ENCODE measurements at regions of chr3 and their contacts with region 1.

Region 1: GRCh38 chr3:149129326-149130205 is at the start of gene HPS3:
- DNase-seq: peak; percentile 86 to 91
- H3K4me3 ChIP-seq: peak within 1 kb of the TSS; percentile 84
- H3K4me3 Mint-ChIP-seq: peak within 1 kb of the TSS; percentile 97
- H3K27ac Mint-ChIP-seq: peak within 1 kb of the TSS; percentile 92
- H3K4me1 ChIP-seq: no peaks in the 10 kb centered on the region; the same call in none of the 2 replicates
- H3K4me1 Mint-ChIP-seq: peaks cover 11% of the 10 kb centered on the region
- H3K27me3 ChIP-seq: no peaks in the 10 kb centered on the region
- H3K27me3 Mint-ChIP-seq: no peaks in the 10 kb centered on the region
- CTCF ChIP-seq: no peak
- total RNA-seq, gene HPS3: 19.4 and 20.9 TPM in 2 replicates

Region 2: DNA sequence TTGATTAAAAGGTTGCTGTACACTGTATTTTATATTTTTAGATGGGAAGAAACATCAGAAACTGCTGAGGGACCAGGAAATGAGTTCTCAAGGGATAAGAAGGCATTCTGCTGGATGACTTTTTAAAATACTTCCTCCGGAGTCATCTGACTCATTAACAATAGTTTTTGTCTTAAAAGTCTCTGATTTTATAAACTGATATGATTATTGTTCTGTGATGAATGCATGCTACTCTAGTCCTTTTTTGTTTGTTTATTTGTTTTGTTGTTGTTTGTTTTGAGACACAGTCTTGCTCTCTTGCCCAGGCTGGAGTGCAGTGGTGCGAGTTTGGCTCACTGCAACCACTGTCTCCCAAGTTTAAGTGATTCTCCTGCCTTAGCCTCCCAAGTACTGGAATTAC is 25.1 kb before region 1 on chr3:
- CTCF ChIA-PET with region 1: no interaction called
- POLR2A ChIA-PET with region 1: no interaction called
- intact Hi-C with region 1: loop called (anchors 1 kb)
- DNase-seq: no peak
- H3K4me3 ChIP-seq: no peak overlapping the region
- H3K4me3 Mint-ChIP-seq: no peak overlapping the region
- H3K27ac Mint-ChIP-seq: no peak overlapping the region
- H3K4me1 ChIP-seq: 0 out of 2 replicates have a peak, but pooled peaks cover 3% of the 10 kb centered on the region
- H3K4me1 Mint-ChIP-seq: no peaks in the 10 kb centered on the region
- H3K27me3 ChIP-seq: no peaks in the 10 kb centered on the region
- H3K27me3 Mint-ChIP-seq: no peaks in the 10 kb centered on the region
- CTCF ChIP-seq: no peak

Region 3: DNA sequence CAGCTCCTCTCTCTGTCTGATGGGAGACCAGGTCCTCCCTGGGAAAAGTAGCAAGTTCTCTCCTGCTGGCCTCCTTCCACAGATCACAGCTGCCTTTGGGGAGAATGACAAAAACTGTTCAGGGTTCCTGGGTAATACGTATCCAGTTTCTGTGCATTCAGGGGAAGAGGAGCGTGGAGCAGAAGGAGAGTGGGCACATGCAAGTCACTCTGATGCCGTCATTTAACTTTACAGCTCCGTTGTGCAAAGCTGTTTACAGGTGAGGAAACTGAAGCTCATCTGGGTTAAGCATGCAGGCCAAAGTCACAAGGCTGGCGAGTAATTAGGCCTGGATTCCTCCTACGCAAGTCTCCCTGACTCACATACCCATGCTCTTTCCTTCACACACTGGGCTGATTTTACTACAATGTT is 255.3 kb after region 1 on chr3:
- CTCF ChIA-PET with region 1: no interaction called
- POLR2A ChIA-PET with region 1: no interaction called
- intact Hi-C with region 1: loop called (anchors 5 kb)
- DNase-seq: peak in 1 of 2 experiments; percentile 53
- H3K4me3 ChIP-seq: no peak overlapping the region
- H3K4me3 Mint-ChIP-seq: peak overlapping the region; percentile 57
- H3K27ac Mint-ChIP-seq: peak overlapping the region; percentile 95
- H3K4me1 ChIP-seq: peaks cover 81% of the 10 kb centered on the region
- H3K4me1 Mint-ChIP-seq: peaks cover 60% of the 10 kb centered on the region
- H3K27me3 ChIP-seq: no peaks in the 10 kb centered on the region
- H3K27me3 Mint-ChIP-seq: no peaks in the 10 kb centered on the region
- CTCF ChIP-seq: no peak